ENCODE measurements at regions of chr9 and their contacts with region 1.

Region 1: GRCh38 chr9:27276193-27277030 is 20.5 kb downstream of the EQTN start:
- DNase-seq: peak in 3 of 7 donors; percentile 19 to 27 (median 26)
- H3K4me3 ChIP-seq: no peak overlapping the region
- H3K27ac ChIP-seq: no peak overlapping the region
- H3K4me1 ChIP-seq: no peaks in the 10 kb centered on the region
- H3K27me3 ChIP-seq: no peaks in the 10 kb centered on the region
- CTCF ChIP-seq: peak; percentile 69 to 92 (median 77)
- POLR2A ChIP-seq: no peak

Region 2: GRCh38 chr9:27033823-27034403 is 242.5 kb before region 1 on chr9:
- intact Hi-C with region 1: loop called in 1 of 2 experiments (anchors 5 kb)
- DNase-seq: peak; percentile 20 to 86 (median 54)
- H3K4me3 ChIP-seq: no peak overlapping the region
- H3K27ac ChIP-seq: no peak overlapping the region
- H3K4me1 ChIP-seq: no peaks in the 10 kb centered on the region
- H3K27me3 ChIP-seq: no peaks in the 10 kb centered on the region
- CTCF ChIP-seq: peak; percentile 61 to 80 (median 70)
- POLR2A ChIP-seq: no peak